SK-N-SH (cell line): ENCODE measurements at regions of chr6 and their contacts with region 1.

Region 1: DNA sequence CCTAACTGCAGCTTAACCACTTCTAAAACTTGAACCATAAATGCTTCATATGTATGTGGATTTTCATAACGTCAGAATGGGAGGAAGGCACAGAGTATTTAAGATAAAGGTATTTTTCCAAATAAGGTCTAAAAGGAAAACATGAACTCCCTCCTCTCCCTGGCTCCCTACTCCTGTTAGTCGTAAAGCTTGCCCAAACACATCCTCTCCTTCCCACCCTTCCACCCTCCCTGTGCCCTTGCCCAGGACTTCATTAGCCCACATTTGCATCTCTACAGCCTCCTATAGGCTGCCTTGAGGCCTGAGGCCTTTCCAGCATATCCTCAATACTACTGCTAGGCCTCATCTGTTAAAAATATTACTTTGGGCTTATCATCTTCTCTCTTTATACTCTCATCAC is 17.1 kb upstream of the SMIM13 start:
- DNase-seq: no peak
- H3K4me3 ChIP-seq: no peak overlapping the region
- H3K27ac ChIP-seq: no peak overlapping the region
- H3K4me1 ChIP-seq: no peaks in the 10 kb centered on the region
- H3K27me3 ChIP-seq: no peaks in the 10 kb centered on the region
- CTCF ChIP-seq: no peak
- EP300 ChIP-seq: no peak
- RAD21 ChIP-seq: no peak

Region 2: DNA sequence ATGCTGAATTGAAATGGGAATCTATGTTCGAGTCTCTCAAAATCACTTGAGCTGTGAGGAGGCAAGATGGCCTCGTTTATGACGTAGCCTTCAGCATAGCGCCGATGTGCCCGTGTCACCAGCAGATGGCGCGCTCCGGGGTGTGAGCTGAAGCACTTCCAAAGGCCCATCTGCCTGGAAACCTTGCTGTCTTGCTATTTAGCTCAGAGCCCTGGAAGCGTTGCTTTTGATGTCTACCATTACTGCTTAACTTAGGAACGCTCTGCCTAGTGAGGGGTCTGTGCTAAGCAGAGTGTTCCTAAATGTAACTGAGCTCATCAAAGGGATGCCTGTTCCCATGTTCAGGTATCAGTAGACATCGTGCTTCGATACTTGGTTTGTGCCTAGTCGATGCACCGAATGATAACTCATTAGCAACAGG is 121.9 kb before region 1 on chr6:
- CTCF ChIA-PET with region 1: interaction called, 22 read pairs
- POLR2A ChIA-PET with region 1: no interaction called
- DNase-seq: peak; percentile 60
- H3K4me3 ChIP-seq: peak overlapping the region in 1 of 2 experiments; percentile 12; a peak in 1 of 4 replicates
- H3K27ac ChIP-seq: no peak overlapping the region
- H3K4me1 ChIP-seq: no peaks in the 10 kb centered on the region; a peak in 1 of 4 replicates
- H3K27me3 ChIP-seq: no peaks in the 10 kb centered on the region
- CTCF ChIP-seq: peak; percentile 69
- EP300 ChIP-seq: no peak
- RAD21 ChIP-seq: peak; percentile 64

Region 3: GRCh38 chr6:11062715-11063114 is 13.8 kb before region 1 on chr6:
- CTCF ChIA-PET with region 1: no interaction called
- POLR2A ChIA-PET with region 1: no interaction called
- DNase-seq: no peak
- H3K4me3 ChIP-seq: no peak overlapping the region
- H3K27ac ChIP-seq: no peak overlapping the region
- H3K4me1 ChIP-seq: peaks cover 0 to 3% of the 10 kb centered on the region in 2 experiments; a peak in 1 of 4 replicates
- H3K27me3 ChIP-seq: no peaks in the 10 kb centered on the region
- CTCF ChIP-seq: no peak
- EP300 ChIP-seq: no peak
- RAD21 ChIP-seq: no peak

Region 4: DNA sequence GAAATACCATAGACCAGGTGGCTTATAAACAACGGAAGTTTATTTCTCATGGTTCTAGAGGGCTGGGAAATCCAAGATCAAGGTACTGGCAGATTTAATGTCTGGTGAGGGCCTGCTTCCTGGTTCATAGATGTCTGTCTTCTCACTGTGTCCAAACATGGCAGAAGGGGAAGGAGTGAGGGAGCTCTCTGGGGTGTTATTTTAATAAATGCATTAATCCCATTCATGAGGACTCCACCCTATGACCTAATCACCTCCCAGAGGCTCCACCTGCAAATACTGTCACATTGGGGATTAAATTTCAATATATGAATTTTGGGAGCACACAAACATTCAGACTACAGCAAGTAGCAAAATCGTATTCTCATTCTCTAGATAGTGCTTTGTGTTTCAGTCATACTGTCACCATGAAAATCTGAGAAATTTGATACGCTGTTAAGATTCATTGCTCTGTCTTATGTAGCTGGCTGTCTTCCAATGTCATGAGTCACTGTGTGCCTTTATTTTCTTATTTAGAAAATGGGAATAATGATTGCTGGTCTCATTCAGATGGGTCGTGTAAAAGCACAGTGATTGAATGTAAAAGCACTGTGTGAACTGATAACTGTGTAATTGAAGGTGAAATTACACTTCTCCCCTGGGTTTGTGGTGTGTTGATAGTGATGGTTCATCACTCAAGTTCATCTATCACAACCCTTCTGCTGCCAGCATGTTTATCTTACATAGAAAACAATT is 43.9 kb after region 1 on chr6:
- CTCF ChIA-PET with region 1: no interaction called
- POLR2A ChIA-PET with region 1: no interaction called
- DNase-seq: no peak
- H3K4me3 ChIP-seq: no peak overlapping the region
- H3K27ac ChIP-seq: peak overlapping the region in 1 of 2 experiments; percentile 13; a peak in 1 of 4 replicates
- H3K4me1 ChIP-seq: peaks cover 0 to 8% of the 10 kb centered on the region in 2 experiments; a peak in 2 of 4 replicates
- H3K27me3 ChIP-seq: no peaks in the 10 kb centered on the region
- CTCF ChIP-seq: no peak
- EP300 ChIP-seq: no peak; a peak in 1 of 4 replicates
- RAD21 ChIP-seq: no peak